HEK293T (cell line): ENCODE measurements at regions of chrX and their contacts with region 1.

Region 1: GRCh38 chrX:23901805-23902204 is 5.9 kb downstream of the APOO start:
- DNase-seq: peak; percentile 42

Region 2: GRCh38 chrX:23694606-23695005 is 207.2 kb before region 1 on chrX:
- CTCF ChIA-PET with region 1: interaction called, 15 read pairs
- POLR2A ChIA-PET with region 1: interaction called, 4 read pairs
- DNase-seq: peak; percentile 68

Region 3: DNA sequence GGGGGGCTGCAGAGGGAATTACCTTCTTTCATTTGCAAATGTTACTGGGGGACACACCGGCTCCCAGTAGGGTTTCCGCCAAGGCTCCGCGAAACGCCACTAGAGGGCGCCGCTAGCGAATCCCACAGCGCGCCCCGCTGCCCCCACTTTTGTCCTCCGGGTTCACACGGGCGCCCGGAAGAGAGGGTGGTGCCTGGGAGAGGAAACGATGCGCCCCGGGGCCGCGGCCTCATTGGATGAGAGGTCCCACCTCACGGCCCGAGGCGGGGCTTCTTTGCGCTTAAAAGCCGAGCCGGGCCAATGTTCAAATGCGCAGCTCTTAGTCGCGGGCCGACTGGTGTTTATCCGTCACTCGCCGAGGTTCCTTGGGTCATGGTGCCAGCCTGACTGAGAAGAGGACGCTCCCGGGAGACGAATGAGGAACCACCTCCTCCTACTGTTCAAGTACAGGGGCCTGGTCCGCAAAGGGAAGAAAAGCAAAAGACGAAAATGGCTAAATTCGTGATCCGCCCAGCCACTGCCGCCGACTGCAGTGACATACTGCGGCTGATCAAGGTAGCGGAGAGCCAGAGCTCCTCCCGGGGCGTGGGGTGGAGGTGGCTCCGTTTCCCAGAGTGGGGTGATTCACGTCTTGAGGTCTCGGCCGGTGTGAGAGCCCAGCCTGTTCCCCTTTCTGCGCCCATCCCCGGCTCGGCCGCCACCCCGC is 118.8 kb before region 1 on chrX and contains the start of gene SAT1:
- CTCF ChIA-PET with region 1: interaction called, 26 read pairs
- POLR2A ChIA-PET with region 1: interaction called, 54 read pairs
- DNase-seq: peak; percentile 87

Region 4: GRCh38 chrX:23803931-23804381 is 97.8 kb before region 1 on chrX:
- CTCF ChIA-PET with region 1: interaction called, 20 read pairs
- POLR2A ChIA-PET with region 1: interaction called, 6 read pairs
- DNase-seq: no peak

Region 5: DNA sequence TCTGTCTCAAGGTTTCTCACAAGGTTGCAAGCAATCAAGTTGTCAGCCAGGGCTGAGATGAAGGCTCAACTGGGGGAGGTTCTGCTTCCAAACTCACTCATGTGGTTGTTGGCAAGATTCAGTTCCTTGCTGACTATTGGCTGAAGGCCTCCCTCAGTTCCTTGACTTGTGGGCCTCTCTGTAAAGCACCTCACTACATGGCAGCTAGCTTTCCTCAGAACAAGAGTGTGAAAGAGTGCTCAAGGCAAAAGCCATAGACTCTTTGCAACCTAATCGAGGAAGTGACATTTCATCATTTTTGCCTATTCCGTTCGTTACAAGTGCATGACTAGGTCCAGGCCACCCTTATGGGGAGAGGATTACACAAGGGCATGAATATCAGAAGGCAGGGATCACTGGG is 58.0 kb after region 1 on chrX:
- CTCF ChIA-PET with region 1: no interaction called
- POLR2A ChIA-PET with region 1: no interaction called
- DNase-seq: no peak

Region 6: GRCh38 chrX:24117258-24117657 is 215.5 kb after region 1 on chrX:
- CTCF ChIA-PET with region 1: no interaction called
- POLR2A ChIA-PET with region 1: no interaction called
- DNase-seq: no peak